Activated CD4-positive, alpha-beta T cell treated with anti-CD3 and anti-CD28 coated beads, Interleukin-2, amount 10 ng/mL, durations not matched to agents 7 days and 5 days (primary cell): ENCODE measurements at regions of chr11 and their contacts with region 1.

Region 1: GRCh38 chr11:10933455-10934292 is 75.8 kb upstream of the ZBED5 start:
- DNase-seq: peak; percentile 81
- H3K4me3 Mint-ChIP-seq: peak overlapping the region; percentile 73
- H3K27ac Mint-ChIP-seq: peak overlapping the region; percentile 6
- H3K4me1 Mint-ChIP-seq: peaks cover 22% of the 10 kb centered on the region
- H3K27me3 Mint-ChIP-seq: peaks cover 53% of the 10 kb centered on the region

Region 2: DNA sequence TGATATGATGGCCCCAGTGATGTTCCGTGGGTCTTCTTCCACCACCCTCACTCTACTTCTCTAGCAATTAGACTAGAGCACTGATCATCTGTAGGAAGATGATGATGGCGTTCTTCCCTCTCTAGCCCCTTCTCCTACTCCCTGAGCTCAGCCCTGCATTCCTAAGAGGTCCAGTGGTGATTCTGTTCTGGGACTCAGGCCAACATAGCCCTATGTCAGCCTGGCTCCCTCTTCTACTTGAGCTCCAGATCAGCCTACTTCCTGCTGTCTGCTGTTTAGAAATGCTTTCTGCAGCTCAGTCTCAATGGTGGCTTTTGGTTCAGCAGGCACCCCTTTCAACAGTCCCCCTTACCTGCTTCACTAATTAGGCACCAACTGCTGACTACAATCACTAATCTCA is 10.3 kb after region 1 on chr11:
- CTCF ChIA-PET with region 1: interaction called, 12 read pairs
- POLR2A ChIA-PET with region 1: no interaction called
- DNase-seq: no peak
- H3K4me3 Mint-ChIP-seq: no peak overlapping the region
- H3K27ac Mint-ChIP-seq: no peak overlapping the region
- H3K4me1 Mint-ChIP-seq: no peaks in the 10 kb centered on the region
- H3K27me3 Mint-ChIP-seq: peaks cover 19% of the 10 kb centered on the region

Region 3: DNA sequence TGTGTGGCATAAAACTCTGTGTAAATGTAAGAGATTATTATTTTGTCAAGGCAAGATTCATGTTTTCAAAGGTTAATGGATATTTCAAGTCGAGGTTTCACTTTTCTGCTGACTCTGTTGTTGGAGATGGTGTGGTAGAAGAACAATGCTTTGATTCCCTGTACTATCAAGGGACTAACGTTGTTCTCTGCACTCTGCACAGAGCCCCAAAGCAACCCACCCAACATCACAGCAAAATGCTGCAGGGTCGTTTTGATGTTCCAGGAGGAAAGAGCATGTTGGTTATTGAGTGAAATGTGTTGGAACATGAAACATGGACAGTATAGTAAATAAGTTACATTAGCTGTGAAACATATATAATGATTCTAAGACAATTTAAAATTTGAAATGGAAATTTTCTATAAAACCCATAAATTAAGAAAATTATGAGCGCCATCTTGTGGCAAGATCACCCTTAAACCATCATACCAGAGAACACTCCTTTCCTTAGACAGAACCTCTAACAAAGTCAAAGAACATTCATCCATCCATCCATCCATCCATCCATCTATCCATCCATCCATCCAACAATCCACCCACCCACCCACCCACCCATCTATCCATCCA is 88.6 kb after region 1 on chr11:
- CTCF ChIA-PET with region 1: interaction called, 12 read pairs
- POLR2A ChIA-PET with region 1: no interaction called
- DNase-seq: peak; percentile 27
- H3K4me3 Mint-ChIP-seq: no peak overlapping the region
- H3K27ac Mint-ChIP-seq: no peak overlapping the region
- H3K4me1 Mint-ChIP-seq: no peaks in the 10 kb centered on the region
- H3K27me3 Mint-ChIP-seq: peaks cover 2% of the 10 kb centered on the region